ENCODE measurements at regions of chr18 and their contacts with region 1.

Region 1: DNA sequence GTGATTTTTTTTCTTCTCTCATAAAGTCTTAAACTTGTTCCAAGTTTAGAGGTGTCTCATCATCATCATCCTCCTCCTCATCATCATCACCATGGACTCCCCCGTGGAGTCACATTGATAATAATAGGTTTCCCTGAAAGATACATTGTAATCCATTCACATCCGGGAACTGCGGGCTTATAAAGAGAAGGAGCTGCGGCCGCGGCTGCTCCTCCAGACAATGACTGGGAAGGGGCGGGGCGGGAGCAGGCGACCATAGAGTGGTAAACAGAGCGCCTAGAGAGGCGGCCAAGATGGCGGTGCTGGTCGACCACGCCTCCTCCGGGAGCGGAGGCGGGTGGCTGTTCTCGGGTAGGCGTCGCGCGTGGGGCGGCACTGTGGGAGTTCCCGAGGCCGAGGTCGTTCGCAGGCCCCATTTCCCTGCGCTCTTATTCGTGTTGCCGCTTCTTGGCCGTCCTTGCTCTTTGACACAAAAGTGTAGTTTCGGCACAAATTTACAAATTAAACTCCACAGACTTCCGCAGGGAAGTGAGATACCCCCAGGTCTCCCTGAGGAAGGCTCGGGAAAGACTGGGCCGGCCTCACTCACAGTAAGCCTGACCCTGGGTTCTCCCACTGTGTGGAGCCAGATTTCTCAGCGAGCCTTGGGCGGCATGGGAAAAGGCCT is 1.8 kb upstream of the TCF4 start:
- DNase-seq: peak; percentile 96
- ATAC-seq: peak; percentile 92
- H3K4me3 ChIP-seq: peak overlapping the region; percentile 78
- H3K27ac ChIP-seq: peak overlapping the region; percentile 75
- H3K4me1 ChIP-seq: peaks cover 3% of the 10 kb centered on the region
- H3K27me3 ChIP-seq: no peaks in the 10 kb centered on the region
- CTCF ChIP-seq: no peak
- POLR2A ChIP-seq: peak; percentile 88
- RAD21 ChIP-seq: no peak

Region 2: GRCh38 chr18:55343396-55344073 is 246.2 kb before region 1 on chr18:
- CTCF ChIA-PET with region 1: no interaction called
- POLR2A ChIA-PET with region 1: no interaction called
- dilution Hi-C with region 1: no loop called
- in situ Hi-C with region 1: no loop called
- intact Hi-C with region 1: loop called (anchors 5 kb)
- DNase-seq: peak; percentile 64
- ATAC-seq: peak; percentile 84
- H3K4me3 ChIP-seq: no peak overlapping the region
- H3K27ac ChIP-seq: no peak overlapping the region
- H3K4me1 ChIP-seq: peaks cover 10% of the 10 kb centered on the region
- H3K27me3 ChIP-seq: no peaks in the 10 kb centered on the region
- CTCF ChIP-seq: peak; percentile 65
- POLR2A ChIP-seq: no peak
- RAD21 ChIP-seq: peak; percentile 80

Region 3: DNA sequence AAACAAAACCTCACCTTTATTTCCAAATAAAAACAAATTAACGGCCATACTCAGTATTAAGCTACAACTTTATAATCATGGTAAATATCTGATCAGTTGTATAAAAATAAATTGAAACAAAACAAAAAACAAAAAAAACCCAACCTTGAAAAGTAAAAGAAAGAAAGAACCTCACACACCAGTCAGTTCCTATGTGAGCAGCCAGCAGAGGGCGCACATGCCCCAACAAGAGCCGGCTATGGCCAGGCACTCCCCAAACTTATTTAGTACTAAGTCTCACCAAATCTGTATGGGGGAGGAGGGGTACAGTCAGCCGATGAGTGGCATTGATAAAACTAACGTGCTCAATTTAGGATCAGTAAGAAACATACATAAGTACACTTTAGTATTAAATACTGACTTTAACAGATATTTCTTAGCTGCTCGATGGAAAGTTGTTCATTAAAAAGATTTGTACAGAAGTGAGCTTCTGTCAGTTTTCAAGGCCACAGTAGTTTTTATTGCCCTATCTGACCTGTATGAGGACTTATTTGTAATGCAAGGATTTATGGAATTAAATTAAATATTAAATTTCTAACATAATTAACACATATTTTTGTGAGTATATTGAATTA is 174.4 kb before region 1 on chr18:
- CTCF ChIA-PET with region 1: no interaction called
- POLR2A ChIA-PET with region 1: no interaction called
- dilution Hi-C with region 1: no loop called
- in situ Hi-C with region 1: loop called (anchors 5 kb)
- intact Hi-C with region 1: loop called (anchors 1 kb)
- DNase-seq: peak; percentile 86
- ATAC-seq: peak; percentile 92
- H3K4me3 ChIP-seq: no peak overlapping the region
- H3K27ac ChIP-seq: no peak overlapping the region
- H3K4me1 ChIP-seq: peaks cover 9% of the 10 kb centered on the region
- H3K27me3 ChIP-seq: no peaks in the 10 kb centered on the region
- CTCF ChIP-seq: peak; percentile 90
- POLR2A ChIP-seq: no peak
- RAD21 ChIP-seq: peak; percentile 94

Region 4: DNA sequence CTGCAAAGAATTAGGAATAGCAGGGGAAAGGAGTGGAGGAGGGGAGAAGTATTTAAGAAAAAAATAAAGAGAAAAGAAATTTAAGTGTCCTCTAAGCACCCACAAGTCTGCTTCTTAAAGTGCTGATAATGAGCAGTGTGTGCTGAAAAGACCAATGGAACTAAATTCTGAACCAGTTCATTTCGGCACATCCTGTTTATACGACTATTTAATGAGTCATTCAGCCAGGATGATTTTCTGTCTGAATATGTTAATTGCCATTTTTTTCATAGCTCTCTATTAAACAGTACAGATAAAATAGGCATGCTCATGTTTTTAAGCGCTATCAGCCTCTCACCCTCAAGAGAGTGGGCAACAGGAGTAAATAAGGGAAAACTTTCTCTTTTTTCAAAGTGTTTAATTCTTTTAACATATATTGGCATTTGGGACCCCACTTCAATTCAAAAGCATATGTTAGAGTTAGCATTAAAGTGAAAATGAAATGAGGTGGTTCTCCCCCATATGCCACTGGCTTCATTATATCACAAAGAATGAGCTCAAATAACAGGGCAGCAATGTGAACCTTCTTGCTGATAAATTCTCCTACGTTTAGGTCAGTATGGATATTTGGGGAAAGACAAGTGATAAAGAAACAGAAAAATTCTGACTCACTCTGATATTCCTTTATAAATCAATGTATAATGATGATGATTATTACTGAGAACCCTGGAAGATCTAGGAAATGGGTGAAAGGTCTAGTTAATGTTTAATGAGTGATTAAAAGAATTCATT is 89.3 kb before region 1 on chr18:
- CTCF ChIA-PET with region 1: no interaction called
- POLR2A ChIA-PET with region 1: no interaction called
- dilution Hi-C with region 1: no loop called
- in situ Hi-C with region 1: no loop called
- intact Hi-C with region 1: loop called (anchors 5 kb)
- DNase-seq: peak; percentile 92
- ATAC-seq: peak; percentile 85
- H3K4me3 ChIP-seq: peak overlapping the region; percentile 26; the same call in 1 of the 2 replicates
- H3K27ac ChIP-seq: peak overlapping the region; percentile 52
- H3K4me1 ChIP-seq: peaks cover 16% of the 10 kb centered on the region
- H3K27me3 ChIP-seq: no peaks in the 10 kb centered on the region
- CTCF ChIP-seq: no peak
- POLR2A ChIP-seq: no peak; the same call in none of the 2 replicates
- RAD21 ChIP-seq: no peak; the same call in 1 of the 2 replicates

Region 5: GRCh38 chr18:55781481-55781957 is 191.8 kb after region 1 on chr18:
- CTCF ChIA-PET with region 1: interaction called, 3 read pairs
- POLR2A ChIA-PET with region 1: interaction called, 11 read pairs
- dilution Hi-C with region 1: no loop called
- in situ Hi-C with region 1: loop called (anchors 10 kb)
- intact Hi-C with region 1: loop called (anchors 1 kb)
- DNase-seq: peak; percentile 77
- ATAC-seq: peak; percentile 63
- H3K4me3 ChIP-seq: no peak overlapping the region
- H3K27ac ChIP-seq: no peak overlapping the region
- H3K4me1 ChIP-seq: no peaks in the 10 kb centered on the region; the same call in 1 of the 2 replicates
- H3K27me3 ChIP-seq: no peaks in the 10 kb centered on the region
- CTCF ChIP-seq: peak; percentile 80
- POLR2A ChIP-seq: no peak
- RAD21 ChIP-seq: peak; percentile 87

Region 6: DNA sequence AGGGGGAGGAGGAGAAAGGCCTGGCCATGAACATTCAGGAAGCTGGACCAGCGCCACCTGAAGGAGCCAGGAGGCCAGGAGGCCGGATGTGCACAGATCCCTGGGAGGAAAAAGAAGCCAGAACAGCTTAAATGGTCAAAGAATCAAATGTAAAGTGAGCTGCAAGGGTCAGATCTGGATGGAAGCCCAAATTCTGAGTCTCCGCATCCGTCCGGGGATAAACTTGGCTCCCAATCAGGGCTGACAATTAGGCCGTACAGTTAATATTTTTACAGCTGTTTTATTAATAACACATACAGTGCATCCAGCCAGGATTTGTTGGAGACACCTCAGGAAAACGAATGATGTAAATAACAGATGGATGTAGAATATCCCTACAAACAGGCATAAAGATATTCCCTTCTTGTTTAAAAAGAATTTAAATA is 493.4 kb after region 1 on chr18:
- CTCF ChIA-PET with region 1: no interaction called
- POLR2A ChIA-PET with region 1: no interaction called
- dilution Hi-C with region 1: no loop called
- in situ Hi-C with region 1: no loop called
- intact Hi-C with region 1: loop called (anchors 5 kb)
- DNase-seq: peak; percentile 92
- ATAC-seq: peak; percentile 78
- H3K4me3 ChIP-seq: no peak overlapping the region
- H3K27ac ChIP-seq: peak overlapping the region; percentile 63; the same call in 1 of the 2 replicates
- H3K4me1 ChIP-seq: peaks cover 11% of the 10 kb centered on the region
- H3K27me3 ChIP-seq: no peaks in the 10 kb centered on the region
- CTCF ChIP-seq: peak; percentile 31; the same call in 1 of the 2 replicates
- POLR2A ChIP-seq: no peak
- RAD21 ChIP-seq: 0 out of 2 replicates have a peak, but pooled peaks have one; percentile 14

Region 7: DNA sequence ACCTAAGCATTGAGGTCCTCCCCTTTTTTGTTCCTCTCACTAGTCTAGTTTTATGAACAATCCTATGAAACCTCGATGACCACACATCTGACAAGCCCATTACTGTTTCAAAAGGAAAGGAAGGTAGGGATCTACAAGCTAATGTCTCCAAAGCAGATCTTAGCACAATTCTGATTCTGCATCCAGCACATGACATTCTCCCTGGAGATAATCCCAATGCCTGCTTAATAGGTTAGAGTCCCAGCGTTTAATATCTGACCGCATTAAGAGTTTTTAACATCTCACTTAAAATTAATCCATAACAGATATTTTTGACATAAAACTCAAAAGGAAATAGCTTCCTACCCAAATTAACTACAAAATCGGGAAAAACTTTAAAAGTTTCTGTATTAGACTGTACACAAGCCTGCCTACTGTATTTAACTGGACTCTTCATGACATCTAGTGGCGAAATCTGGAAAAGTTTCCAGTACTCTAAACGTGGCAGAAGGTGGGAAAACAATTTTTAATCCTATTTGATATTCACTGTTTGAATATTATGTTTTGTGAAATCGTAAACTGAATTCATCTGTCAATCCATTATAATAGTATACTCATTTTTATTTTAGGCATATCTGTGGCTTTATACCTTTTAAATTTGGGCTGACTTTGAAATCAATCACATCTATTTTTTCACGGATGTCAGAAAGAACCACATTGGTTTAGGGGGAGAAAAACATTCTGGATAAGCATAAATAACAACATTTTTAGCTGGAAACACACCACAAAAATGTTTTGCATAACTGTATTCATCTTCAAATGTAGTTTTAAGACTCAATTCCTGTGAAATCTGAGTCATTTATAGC is 986.3 kb after region 1 on chr18:
- CTCF ChIA-PET with region 1: no interaction called
- POLR2A ChIA-PET with region 1: no interaction called
- dilution Hi-C with region 1: no loop called
- in situ Hi-C with region 1: no loop called
- intact Hi-C with region 1: loop called (anchors 1 kb)
- DNase-seq: peak; percentile 71
- ATAC-seq: peak; percentile 80
- H3K4me3 ChIP-seq: no peak overlapping the region
- H3K27ac ChIP-seq: no peak overlapping the region
- H3K4me1 ChIP-seq: peaks cover 10% of the 10 kb centered on the region
- H3K27me3 ChIP-seq: no peaks in the 10 kb centered on the region
- CTCF ChIP-seq: peak; percentile 77
- POLR2A ChIP-seq: peak; percentile 44; the same call in 1 of the 2 replicates
- RAD21 ChIP-seq: peak; percentile 87